Psoas muscle (tissue), 8 donors: ENCODE measurements at regions of chr22 and their contacts with region 1.

Region 1: DNA sequence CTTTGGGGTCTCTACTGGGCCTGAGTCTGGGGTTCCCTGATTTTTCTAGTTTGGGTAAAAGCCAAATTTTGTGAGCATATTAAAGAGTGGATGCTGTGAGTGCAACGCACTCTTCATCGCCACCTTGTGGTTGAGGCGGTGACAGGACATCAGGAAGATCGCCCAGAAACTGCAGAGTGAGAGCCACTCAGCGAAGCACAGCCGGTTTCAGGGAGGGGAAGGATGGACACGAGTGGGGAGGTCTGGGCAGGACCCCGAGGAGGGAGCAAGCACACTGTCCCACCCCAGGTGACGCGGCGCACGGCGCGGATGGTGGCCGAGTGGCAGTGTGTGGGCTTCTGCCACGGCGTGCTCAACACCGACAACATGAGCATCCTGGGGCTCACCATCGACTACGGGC is 9.1 kb downstream of the SELENOO start:
- DNase-seq: peak; percentile 69 to 84
- ATAC-seq: peak; percentile 34 to 60 (median 44)
- H3K4me3 ChIP-seq: no peak overlapping the region
- H3K27ac ChIP-seq: no peak overlapping the region
- H3K4me1 ChIP-seq: peaks cover 23% of the 10 kb centered on the region
- H3K27me3 ChIP-seq: no peaks in the 10 kb centered on the region
- CTCF ChIP-seq: peak; percentile 78

Region 2: DNA sequence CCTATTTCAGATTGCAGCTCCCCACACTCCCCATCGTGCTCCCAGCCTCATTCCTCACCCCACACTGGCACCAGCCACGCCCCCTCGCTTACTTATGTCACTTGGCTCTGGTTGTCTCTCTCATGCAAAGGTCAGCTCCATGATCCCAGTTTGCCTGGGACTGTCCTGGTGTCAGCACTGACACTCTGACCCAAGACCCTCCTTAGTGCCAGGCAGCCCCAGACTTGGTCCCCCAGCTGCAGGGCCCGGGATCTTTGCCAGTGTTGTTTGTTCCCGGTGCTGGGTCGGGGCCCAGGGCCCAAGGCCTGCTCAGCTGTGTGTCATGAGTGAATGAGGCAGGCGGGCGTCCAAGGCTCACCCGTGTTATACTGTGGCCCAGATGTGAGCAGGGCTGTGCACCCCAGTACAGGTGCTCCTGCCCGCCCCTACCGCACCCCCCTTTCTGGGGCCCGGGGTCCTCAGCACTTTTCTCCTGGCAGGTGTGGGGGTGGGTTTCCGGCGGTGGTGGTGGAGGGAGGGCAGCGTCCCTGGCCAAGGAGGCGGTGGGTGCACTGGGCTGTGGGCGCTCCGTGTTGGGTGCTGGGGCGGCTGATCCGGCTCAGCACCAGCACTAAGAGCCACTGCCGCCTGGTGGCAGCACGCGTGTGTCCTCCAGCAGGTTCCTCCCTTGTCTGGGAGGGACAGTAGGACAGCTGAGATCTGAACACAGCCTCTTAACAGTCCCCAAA is 216.8 kb before region 1 on chr22:
- intact Hi-C with region 1: no loop called
- DNase-seq: peak; percentile 63 to 84
- ATAC-seq: peak; percentile 90 to 97 (median 91)
- H3K4me3 ChIP-seq: no peak overlapping the region
- H3K27ac ChIP-seq: no peak overlapping the region
- H3K4me1 ChIP-seq: peaks cover 5% of the 10 kb centered on the region
- H3K27me3 ChIP-seq: no peaks in the 10 kb centered on the region
- CTCF ChIP-seq: peak; percentile 73

Region 3: GRCh38 chr22:50058906-50059880 is 150.7 kb before region 1 on chr22:
- intact Hi-C with region 1: no loop called
- DNase-seq: no peak
- ATAC-seq: no peak
- H3K4me3 ChIP-seq: no peak overlapping the region
- H3K27ac ChIP-seq: no peak overlapping the region
- H3K4me1 ChIP-seq: peaks cover 3% of the 10 kb centered on the region
- H3K27me3 ChIP-seq: peaks cover 0 to 40% (median 34%) of the 10 kb centered on the region in 3 donors
- CTCF ChIP-seq: no peak

Region 4: DNA sequence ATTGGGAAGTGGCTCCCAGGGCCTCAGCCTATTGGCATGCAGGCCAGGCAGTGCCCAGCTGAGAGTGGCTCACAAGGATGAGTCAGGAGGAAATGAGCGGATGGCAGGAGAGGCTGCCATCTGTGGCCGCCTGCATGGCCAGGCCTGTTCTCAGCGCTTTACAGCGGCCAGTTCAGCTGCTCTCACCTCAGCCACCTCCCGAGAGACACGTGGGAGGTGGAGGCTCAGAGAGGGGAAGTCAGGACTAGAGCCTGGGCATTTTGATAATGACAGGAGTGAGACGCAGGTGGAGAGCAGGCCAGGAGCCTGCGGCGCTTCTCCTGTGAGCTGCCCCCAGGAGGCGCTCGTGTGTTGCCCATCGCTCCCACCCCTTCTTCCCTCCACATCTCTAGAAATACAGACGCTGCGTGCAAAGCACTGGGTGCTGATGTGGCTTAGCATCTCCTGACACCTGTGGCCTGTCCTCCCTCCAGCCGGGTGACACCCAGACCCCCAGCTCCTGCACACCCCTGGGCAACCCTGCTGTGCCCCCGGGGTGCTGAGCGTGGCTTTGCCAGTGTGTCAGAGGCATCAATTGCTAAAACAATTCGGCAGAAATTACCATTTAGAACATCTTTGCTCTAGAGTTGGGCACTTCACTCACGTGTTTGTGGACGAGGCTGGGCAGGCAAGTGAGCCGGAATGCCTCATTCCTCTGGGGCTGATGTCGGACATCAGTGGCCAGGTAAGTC is 60.7 kb before region 1 on chr22:
- intact Hi-C with region 1: loop called (anchors 2 kb)
- DNase-seq: no peak
- ATAC-seq: peak; percentile 25 to 84 (median 66)
- H3K4me3 ChIP-seq: no peak overlapping the region
- H3K27ac ChIP-seq: no peak overlapping the region
- H3K4me1 ChIP-seq: no peaks in the 10 kb centered on the region
- H3K27me3 ChIP-seq: peaks cover 0 to 2% (median 0%) of the 10 kb centered on the region in 3 donors
- CTCF ChIP-seq: peak; percentile 56

Region 5: DNA sequence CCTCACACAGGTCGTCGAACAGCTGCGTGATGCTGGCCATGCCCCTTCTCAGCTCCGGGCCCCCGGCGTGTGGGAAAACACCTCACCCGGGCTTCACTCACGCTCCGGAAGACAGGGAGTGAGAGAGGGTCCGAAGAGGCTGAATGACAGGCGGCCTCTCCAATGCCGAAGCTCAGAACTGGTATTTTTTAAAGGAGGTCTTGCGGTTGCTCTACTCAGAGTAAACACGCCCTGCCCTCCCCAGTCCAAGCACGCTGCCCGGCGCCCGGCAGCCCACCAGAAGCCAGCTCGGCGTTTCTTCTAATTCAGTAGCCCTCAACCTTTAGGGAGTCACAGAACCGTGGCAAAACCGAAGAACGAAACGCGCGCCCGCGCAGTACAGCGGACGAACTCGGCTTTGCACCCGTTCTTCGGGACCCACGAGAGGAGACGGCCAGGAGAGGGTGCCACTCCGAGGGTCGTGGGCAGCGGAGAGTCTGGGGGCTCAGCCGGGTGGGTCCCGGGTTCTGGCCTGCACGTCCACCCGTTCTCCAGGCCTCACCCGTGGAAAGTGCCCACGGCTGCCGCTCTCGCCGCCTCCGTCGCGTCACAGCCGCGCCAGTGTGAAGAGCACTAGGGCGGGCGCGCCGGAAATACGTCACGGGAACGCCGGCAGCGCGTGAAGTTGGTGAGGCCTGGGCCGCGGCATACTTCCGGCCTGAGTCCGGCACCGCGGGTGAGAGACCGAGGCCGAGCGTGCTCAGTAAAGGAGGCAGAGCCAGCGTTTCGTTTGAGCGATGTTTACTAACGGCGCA is 34.7 kb after region 1 on chr22 and contains the start of gene TUBGCP6:
- intact Hi-C with region 1: loop called in 1 of 2 experiments (anchors 5 kb)
- DNase-seq: peak; percentile 98
- ATAC-seq: peak; percentile 89 to 91 (median 90)
- H3K4me3 ChIP-seq: peak within 1 kb of the TSS; percentile 98
- H3K27ac ChIP-seq: peak within 1 kb of the TSS; percentile 95
- H3K4me1 ChIP-seq: peaks cover 45% of the 10 kb centered on the region
- H3K27me3 ChIP-seq: no peaks in the 10 kb centered on the region
- CTCF ChIP-seq: peak; percentile 27
- total RNA-seq, gene TUBGCP6: 18.0 to 21.8 (median 19.0) TPM